GM12878 (cell line): ENCODE measurements at regions of chr11 and their contacts with region 1.

Region 1: DNA sequence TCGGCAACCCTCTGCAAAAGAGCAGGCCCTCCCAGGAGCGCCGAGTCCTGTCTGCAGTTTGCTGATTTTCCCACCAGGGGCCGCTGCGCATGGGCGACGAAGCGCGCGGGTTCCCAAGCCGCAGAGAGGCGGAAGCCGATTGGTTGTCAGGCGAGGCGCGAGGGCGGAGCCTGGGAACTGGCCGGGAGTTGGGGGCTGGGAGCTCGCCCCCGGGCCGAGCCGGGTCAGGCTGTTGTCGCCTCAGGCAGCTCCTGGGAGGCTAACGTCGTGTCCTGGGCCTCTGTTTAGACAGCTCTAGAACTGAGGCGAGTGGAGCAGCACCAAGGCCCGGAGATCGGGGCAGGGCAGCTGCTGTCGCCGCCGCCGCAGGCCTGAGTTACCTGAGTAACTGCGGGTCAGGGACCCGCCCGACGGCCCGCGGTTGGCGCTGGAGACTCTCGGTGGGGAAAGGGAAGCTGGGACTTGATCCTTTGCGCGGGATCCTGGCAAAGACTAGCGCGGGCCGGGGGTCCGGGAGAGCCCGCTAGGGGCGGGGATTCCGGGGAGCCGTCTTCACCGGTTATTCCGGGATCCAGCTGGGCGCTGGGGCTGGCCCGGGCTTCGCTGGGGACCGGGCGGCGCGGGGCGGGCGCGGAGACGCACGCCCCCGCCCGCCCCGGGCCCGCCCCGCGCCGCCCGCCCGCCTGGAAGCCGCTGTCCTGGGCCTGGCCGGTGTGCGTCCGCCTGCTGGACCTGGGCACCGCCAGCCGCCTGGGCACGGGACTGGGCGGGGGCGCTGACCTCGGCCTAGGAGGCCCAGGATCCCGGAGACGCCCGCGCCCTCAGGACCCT is at the start of gene STIM1:
- DNase-seq: peak; percentile 88
- ATAC-seq: peak; percentile 76
- H3K4me3 ChIP-seq: peak within 1 kb of the TSS; percentile 94
- H3K27ac ChIP-seq: peak within 1 kb of the TSS; percentile 97
- H3K4me1 ChIP-seq: peaks cover 32% of the 10 kb centered on the region
- H3K27me3 ChIP-seq: no peaks in the 10 kb centered on the region
- CTCF ChIP-seq: peak; percentile 87 to 98 (median 93); a peak in 5 of 6 replicates
- EP300 ChIP-seq: no peak
- POLR2A ChIP-seq: peak; percentile 72
- RAD21 ChIP-seq: peak; percentile 92
- polyA plus RNA-seq, gene STIM1: 8.6 to 9.9 TPM

Region 2: GRCh38 chr11:3160252-3161031 is 694.8 kb before region 1 on chr11:
- CTCF ChIA-PET with region 1: no interaction called
- POLR2A ChIA-PET with region 1: no interaction called
- RAD21 ChIA-PET with region 1: no interaction called
- SMC1A ChIA-PET with region 1: no interaction called
- in situ Hi-C with region 1: no loop called
- intact Hi-C with region 1: no loop called
- DNase-seq: no peak
- ATAC-seq: peak; percentile 16; the same call in 1 of the 3 replicates
- H3K4me3 ChIP-seq: no peak overlapping the region
- H3K27ac ChIP-seq: no peak overlapping the region
- H3K4me1 ChIP-seq: no peaks in the 10 kb centered on the region
- H3K27me3 ChIP-seq: peaks cover 8 to 10% of the 10 kb centered on the region in 2 experiments
- CTCF ChIP-seq: no peak
- EP300 ChIP-seq: no peak
- POLR2A ChIP-seq: no peak
- RAD21 ChIP-seq: no peak

Region 3: DNA sequence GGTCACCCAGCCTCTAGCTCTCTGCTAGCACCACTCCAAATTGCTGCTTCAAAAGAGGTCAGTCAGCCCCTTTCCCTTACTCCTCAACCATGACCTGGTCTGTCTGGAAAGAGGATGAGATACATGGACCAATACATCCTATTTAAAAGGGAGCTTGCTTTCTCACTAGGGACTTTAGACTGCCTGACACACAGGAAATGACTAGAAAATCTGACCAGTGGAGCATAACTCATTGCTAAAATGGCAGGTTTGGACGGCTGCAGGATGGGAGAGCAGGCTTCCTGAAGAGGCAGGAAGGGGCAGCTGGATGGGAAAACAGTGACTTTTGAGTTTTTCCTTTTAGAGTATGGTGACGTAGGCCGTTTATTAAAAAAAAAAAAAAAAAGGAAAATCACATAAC is 25.5 kb after region 1 on chr11:
- CTCF ChIA-PET with region 1: interaction called, 1,047 read pairs
- POLR2A ChIA-PET with region 1: interaction called, 405 read pairs
- RAD21 ChIA-PET with region 1: interaction called, 253 read pairs
- SMC1A ChIA-PET with region 1: interaction called, 633 read pairs
- in situ Hi-C with region 1: no loop called
- intact Hi-C with region 1: loop called (anchors 2 kb)
- DNase-seq: no peak
- ATAC-seq: peak; percentile 70
- H3K4me3 ChIP-seq: peak overlapping the region; percentile 46
- H3K27ac ChIP-seq: peak overlapping the region; percentile 83
- H3K4me1 ChIP-seq: peaks cover 65% of the 10 kb centered on the region
- H3K27me3 ChIP-seq: no peaks in the 10 kb centered on the region
- CTCF ChIP-seq: no peak
- EP300 ChIP-seq: no peak
- POLR2A ChIP-seq: 0 out of 2 replicates have a peak, but pooled peaks have one; percentile 19
- RAD21 ChIP-seq: no peak

Region 4: DNA sequence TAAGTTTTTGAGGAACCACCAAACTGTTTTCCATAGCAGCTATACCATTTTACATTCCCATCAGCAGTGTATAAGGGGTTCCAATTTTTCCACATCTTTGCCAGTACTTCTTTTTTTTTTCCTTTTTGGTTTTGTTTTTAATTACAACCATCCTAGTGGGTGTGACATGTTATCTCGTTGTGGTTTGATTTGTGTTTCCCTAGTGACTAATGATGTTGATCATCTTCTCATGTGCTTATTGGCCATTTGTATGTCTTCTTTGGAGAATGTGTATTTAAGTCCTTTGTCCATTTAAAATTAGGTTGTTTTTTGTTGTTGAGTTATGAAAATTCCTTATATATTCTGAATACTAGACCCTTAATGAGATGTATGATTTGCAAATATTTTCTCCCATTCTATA is 59.6 kb after region 1 on chr11:
- CTCF ChIA-PET with region 1: interaction called, 6 read pairs
- POLR2A ChIA-PET with region 1: interaction called, 4 read pairs
- RAD21 ChIA-PET with region 1: interaction called, 11 read pairs
- SMC1A ChIA-PET with region 1: interaction called, 8 read pairs
- in situ Hi-C with region 1: no loop called
- intact Hi-C with region 1: loop called (anchors 2 kb)
- DNase-seq: no peak
- ATAC-seq: 0 out of 3 replicates have a peak, but pooled peaks have one; percentile 25
- H3K4me3 ChIP-seq: no peak overlapping the region
- H3K27ac ChIP-seq: no peak overlapping the region
- H3K4me1 ChIP-seq: peaks cover 3% of the 10 kb centered on the region
- H3K27me3 ChIP-seq: no peaks in the 10 kb centered on the region
- CTCF ChIP-seq: no peak
- EP300 ChIP-seq: no peak
- POLR2A ChIP-seq: no peak
- RAD21 ChIP-seq: no peak

Region 5: GRCh38 chr11:3947061-3947460 is 91.9 kb after region 1 on chr11:
- CTCF ChIA-PET with region 1: interaction called, 15 read pairs
- POLR2A ChIA-PET with region 1: interaction called, 7 read pairs
- RAD21 ChIA-PET with region 1: interaction called, 16 read pairs
- SMC1A ChIA-PET with region 1: interaction called, 41 read pairs
- in situ Hi-C with region 1: no loop called
- intact Hi-C with region 1: loop called (anchors 2 kb)
- DNase-seq: peak; percentile 76
- ATAC-seq: peak; percentile 78
- H3K4me3 ChIP-seq: 0 out of 2 replicates have a peak overlapping the region, but pooled peaks have one; percentile 19
- H3K27ac ChIP-seq: peak overlapping the region; percentile 52
- H3K4me1 ChIP-seq: peaks cover 55% of the 10 kb centered on the region
- H3K27me3 ChIP-seq: no peaks in the 10 kb centered on the region
- CTCF ChIP-seq: no peak
- EP300 ChIP-seq: no peak
- POLR2A ChIP-seq: no peak
- RAD21 ChIP-seq: no peak

Region 6: GRCh38 chr11:3984896-3985295 is 129.7 kb after region 1 on chr11:
- CTCF ChIA-PET with region 1: interaction called, 17 read pairs
- POLR2A ChIA-PET with region 1: no interaction called
- RAD21 ChIA-PET with region 1: interaction called, 21 read pairs
- SMC1A ChIA-PET with region 1: interaction called, 11 read pairs
- in situ Hi-C with region 1: no loop called
- intact Hi-C with region 1: no loop called
- DNase-seq: no peak
- ATAC-seq: no peak
- H3K4me3 ChIP-seq: no peak overlapping the region
- H3K27ac ChIP-seq: no peak overlapping the region
- H3K4me1 ChIP-seq: no peaks in the 10 kb centered on the region
- H3K27me3 ChIP-seq: no peaks in the 10 kb centered on the region
- CTCF ChIP-seq: peak in 1 of 3 experiments; percentile 31; a peak in 1 of 6 replicates
- EP300 ChIP-seq: no peak
- POLR2A ChIP-seq: no peak
- RAD21 ChIP-seq: peak; percentile 65

Region 7: GRCh38 chr11:4087551-4087950 is 232.4 kb after region 1 on chr11:
- CTCF ChIA-PET with region 1: interaction called, 9 read pairs
- POLR2A ChIA-PET with region 1: no interaction called
- RAD21 ChIA-PET with region 1: interaction called, 10 read pairs
- SMC1A ChIA-PET with region 1: interaction called, 805 read pairs
- in situ Hi-C with region 1: no loop called
- intact Hi-C with region 1: no loop called
- DNase-seq: no peak
- ATAC-seq: no peak
- H3K4me3 ChIP-seq: no peak overlapping the region
- H3K27ac ChIP-seq: no peak overlapping the region
- H3K4me1 ChIP-seq: peaks cover 8% of the 10 kb centered on the region
- H3K27me3 ChIP-seq: no peaks in the 10 kb centered on the region
- CTCF ChIP-seq: no peak
- EP300 ChIP-seq: no peak
- POLR2A ChIP-seq: no peak
- RAD21 ChIP-seq: no peak